Endothelial cell of umbilical vein (primary cell): ENCODE measurements at regions of chr1 and their contacts with region 1.

Region 1: GRCh38 chr1:192516776-192517297 is 58.7 kb upstream of the RGS1 start:
- DNase-seq: no peak
- H3K4me3 ChIP-seq: no peak overlapping the region
- H3K27ac ChIP-seq: no peak overlapping the region
- H3K4me1 ChIP-seq: peaks cover 20% of the 10 kb centered on the region
- H3K27me3 ChIP-seq: no peaks in the 10 kb centered on the region
- CTCF ChIP-seq: no peak
- POLR2A ChIP-seq: no peak

Region 2: DNA sequence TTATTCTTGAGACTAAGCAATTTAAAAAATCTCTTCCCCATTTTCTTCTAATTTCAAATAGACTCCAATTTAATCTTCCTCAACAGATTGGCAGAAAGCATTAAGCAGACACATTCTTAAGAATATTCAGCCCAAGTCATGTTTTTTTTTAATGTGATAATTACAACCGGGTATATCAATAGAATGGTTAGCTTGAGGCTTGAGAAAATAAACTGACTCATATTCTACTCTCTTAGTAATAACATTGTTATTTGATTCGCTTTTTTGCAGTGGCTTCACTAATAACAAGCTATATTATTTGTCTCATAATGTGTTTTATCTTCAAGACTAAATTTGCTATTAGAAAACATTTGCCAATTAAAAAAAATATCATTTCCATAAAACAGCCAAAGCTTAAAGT is 847.2 kb before region 1 on chr1:
- CTCF ChIA-PET with region 1: no interaction called
- POLR2A ChIA-PET with region 1: no interaction called
- dilution Hi-C with region 1: no loop called
- intact Hi-C with region 1: loop called (anchors 5 kb)
- DNase-seq: peak; percentile 4
- H3K4me3 ChIP-seq: no peak overlapping the region
- H3K27ac ChIP-seq: no peak overlapping the region
- H3K4me1 ChIP-seq: no peaks in the 10 kb centered on the region
- H3K27me3 ChIP-seq: no peaks in the 10 kb centered on the region
- CTCF ChIP-seq: no peak
- POLR2A ChIP-seq: no peak